ENCODE measurements at regions of chr16 and their contacts with region 1.

Region 1: GRCh38 chr16:19601083-19601976 is 45.8 kb downstream of the VPS35L start:
- DNase-seq: peak; percentile 39
- H3K4me3 Mint-ChIP-seq: no peak overlapping the region
- H3K27ac Mint-ChIP-seq: peak overlapping the region; percentile 21
- H3K4me1 Mint-ChIP-seq: peaks cover 2% of the 10 kb centered on the region
- H3K27me3 Mint-ChIP-seq: no peaks in the 10 kb centered on the region

Region 2: GRCh38 chr16:19502395-19503131 is 98.8 kb before region 1 on chr16:
- CTCF ChIA-PET with region 1: no interaction called
- POLR2A ChIA-PET with region 1: no interaction called
- DNase-seq: peak; percentile 75
- H3K4me3 Mint-ChIP-seq: no peak overlapping the region
- H3K27ac Mint-ChIP-seq: no peak overlapping the region
- H3K4me1 Mint-ChIP-seq: peaks cover 22% of the 10 kb centered on the region
- H3K27me3 Mint-ChIP-seq: no peaks in the 10 kb centered on the region

Region 3: DNA sequence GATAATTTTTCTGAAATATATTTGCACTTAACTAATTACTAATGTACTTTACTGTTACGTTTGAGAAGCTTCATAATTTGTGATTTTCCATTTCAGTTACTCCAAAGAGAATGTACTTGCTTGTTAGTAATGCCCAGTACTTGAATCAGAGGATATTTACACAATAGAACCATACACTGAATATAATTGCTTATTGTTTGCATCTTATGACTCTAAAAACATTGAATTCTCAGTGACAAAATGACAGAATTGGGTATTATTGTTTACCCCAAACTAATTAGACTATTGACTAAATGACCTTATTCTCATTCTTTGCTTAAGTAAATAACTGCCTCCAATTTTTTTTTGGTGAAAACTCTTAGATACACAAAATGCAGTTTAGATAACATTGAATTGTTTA is 68.7 kb before region 1 on chr16:
- CTCF ChIA-PET with region 1: no interaction called
- POLR2A ChIA-PET with region 1: no interaction called
- DNase-seq: no peak
- H3K4me3 Mint-ChIP-seq: no peak overlapping the region
- H3K27ac Mint-ChIP-seq: no peak overlapping the region
- H3K4me1 Mint-ChIP-seq: peaks cover 8% of the 10 kb centered on the region
- H3K27me3 Mint-ChIP-seq: no peaks in the 10 kb centered on the region

Region 4: DNA sequence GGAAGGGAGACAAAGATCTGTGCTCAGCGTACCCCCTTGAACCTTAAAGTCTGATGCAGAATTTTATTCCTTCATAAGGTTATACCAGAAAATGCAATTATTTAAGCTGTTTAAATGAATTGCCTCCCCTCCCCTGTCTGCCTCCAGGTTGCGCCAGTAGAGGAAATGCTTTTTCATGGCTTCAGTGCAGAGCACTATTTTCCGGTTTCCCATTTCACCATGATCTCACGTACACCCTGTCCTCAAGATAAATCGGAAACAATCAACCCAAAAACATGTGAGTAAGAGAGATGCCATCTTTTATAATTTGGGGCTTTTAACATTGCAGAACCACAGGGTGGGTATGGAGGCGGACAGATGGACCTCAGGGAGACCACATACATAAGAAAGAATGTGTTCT is 132.2 kb after region 1 on chr16:
- CTCF ChIA-PET with region 1: no interaction called
- POLR2A ChIA-PET with region 1: no interaction called
- DNase-seq: no peak
- H3K4me3 Mint-ChIP-seq: no peak overlapping the region
- H3K27ac Mint-ChIP-seq: no peak overlapping the region
- H3K4me1 Mint-ChIP-seq: no peaks in the 10 kb centered on the region
- H3K27me3 Mint-ChIP-seq: no peaks in the 10 kb centered on the region

Region 5: GRCh38 chr16:19886073-19886941 is 285.0 kb after region 1 on chr16:
- CTCF ChIA-PET with region 1: interaction called, 49 read pairs
- POLR2A ChIA-PET with region 1: interaction called, 5 read pairs
- DNase-seq: peak; percentile 83
- H3K4me3 Mint-ChIP-seq: peak overlapping the region; percentile 70
- H3K27ac Mint-ChIP-seq: no peak overlapping the region
- H3K4me1 Mint-ChIP-seq: peaks cover 17% of the 10 kb centered on the region
- H3K27me3 Mint-ChIP-seq: peaks cover 31% of the 10 kb centered on the region

Region 6: DNA sequence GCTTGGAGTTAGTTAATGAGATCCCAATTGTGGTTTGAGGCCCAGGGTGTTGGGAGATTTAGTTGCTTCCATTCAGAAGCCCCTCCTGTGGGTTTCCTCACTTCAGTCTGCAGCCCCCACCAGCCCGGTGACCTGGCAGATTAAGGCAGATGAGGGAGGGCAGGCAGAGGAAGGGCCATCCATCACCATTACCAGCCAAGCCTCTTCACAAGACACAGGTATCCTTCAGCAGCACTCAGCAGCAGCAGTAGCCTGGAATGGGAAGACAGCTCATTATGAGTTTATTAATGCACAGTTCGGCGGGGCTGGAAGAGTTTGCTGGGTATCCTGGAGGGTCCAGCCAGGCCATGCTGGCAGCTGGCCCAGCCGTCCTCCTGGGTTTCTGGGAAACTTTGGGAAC is 373.3 kb after region 1 on chr16:
- CTCF ChIA-PET with region 1: no interaction called
- POLR2A ChIA-PET with region 1: no interaction called
- DNase-seq: no peak
- H3K4me3 Mint-ChIP-seq: no peak overlapping the region
- H3K27ac Mint-ChIP-seq: no peak overlapping the region
- H3K4me1 Mint-ChIP-seq: no peaks in the 10 kb centered on the region
- H3K27me3 Mint-ChIP-seq: no peaks in the 10 kb centered on the region